ENCODE measurements at regions of chr9 and their contacts with region 1.

Region 1: DNA sequence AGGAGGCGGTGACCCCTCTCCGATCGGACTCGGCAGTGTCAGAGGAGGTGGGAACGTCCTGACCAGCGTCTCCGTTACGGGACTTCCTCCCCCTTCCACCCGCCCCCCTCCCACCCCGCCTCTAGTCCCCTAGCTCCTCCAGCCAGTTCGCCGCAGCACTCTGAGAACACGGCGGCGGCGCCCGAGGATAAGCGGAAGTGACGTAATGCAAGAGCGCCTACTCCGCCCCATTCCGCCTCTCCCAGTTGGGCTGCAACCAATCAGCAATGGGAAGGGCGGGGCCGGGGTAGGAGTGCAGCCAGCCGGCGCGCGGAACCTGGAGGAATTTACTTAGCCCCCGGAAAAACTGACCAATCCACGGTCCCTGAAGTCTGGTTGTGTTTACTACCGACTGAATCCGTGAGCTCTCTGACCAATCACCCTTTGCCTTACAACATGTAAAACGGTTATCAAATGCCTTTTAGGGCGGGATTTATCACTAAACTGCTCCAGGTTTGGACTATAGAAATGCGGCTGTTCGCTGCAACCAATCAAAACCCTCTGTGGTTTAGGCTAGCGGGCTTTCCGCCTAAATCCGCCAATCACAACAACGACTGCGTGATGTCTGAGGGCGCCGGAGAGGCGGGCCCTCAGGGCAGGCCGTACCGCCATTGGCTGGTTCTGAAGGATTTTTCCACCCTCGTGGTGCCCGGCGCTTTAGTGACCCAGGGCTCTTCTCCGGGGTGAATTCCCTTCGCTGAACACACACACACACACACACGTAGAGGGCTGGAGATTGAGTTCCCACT is at the start of gene ZBTB5:
- DNase-seq: peak; percentile 99
- H3K4me3 Mint-ChIP-seq: peak within 1 kb of the TSS; percentile 93
- H3K27ac Mint-ChIP-seq: peak within 1 kb of the TSS; percentile 86
- H3K4me1 Mint-ChIP-seq: peaks cover 30% of the 10 kb centered on the region
- H3K27me3 Mint-ChIP-seq: no peaks in the 10 kb centered on the region
- total RNA-seq, gene ZBTB5: 10.2 TPM

Region 2: GRCh38 chr9:36400332-36401163 is 1064.9 kb before region 1 on chr9:
- CTCF ChIA-PET with region 1: no interaction called
- intact Hi-C with region 1: loop called (anchors 1 kb)
- DNase-seq: peak; percentile 90
- H3K4me3 Mint-ChIP-seq: peak overlapping the region; percentile 86
- H3K27ac Mint-ChIP-seq: peak overlapping the region; percentile 95
- H3K4me1 Mint-ChIP-seq: peaks cover 37% of the 10 kb centered on the region
- H3K27me3 Mint-ChIP-seq: no peaks in the 10 kb centered on the region

Region 3: GRCh38 chr9:37027582-37028419 is 437.6 kb before region 1 on chr9:
- CTCF ChIA-PET with region 1: no interaction called
- intact Hi-C with region 1: loop called (anchors 5 kb)
- DNase-seq: peak; percentile 95
- H3K4me3 Mint-ChIP-seq: peak overlapping the region; percentile 66
- H3K27ac Mint-ChIP-seq: no peak overlapping the region
- H3K4me1 Mint-ChIP-seq: peaks cover 48% of the 10 kb centered on the region
- H3K27me3 Mint-ChIP-seq: peaks cover 85% of the 10 kb centered on the region

Region 4: DNA sequence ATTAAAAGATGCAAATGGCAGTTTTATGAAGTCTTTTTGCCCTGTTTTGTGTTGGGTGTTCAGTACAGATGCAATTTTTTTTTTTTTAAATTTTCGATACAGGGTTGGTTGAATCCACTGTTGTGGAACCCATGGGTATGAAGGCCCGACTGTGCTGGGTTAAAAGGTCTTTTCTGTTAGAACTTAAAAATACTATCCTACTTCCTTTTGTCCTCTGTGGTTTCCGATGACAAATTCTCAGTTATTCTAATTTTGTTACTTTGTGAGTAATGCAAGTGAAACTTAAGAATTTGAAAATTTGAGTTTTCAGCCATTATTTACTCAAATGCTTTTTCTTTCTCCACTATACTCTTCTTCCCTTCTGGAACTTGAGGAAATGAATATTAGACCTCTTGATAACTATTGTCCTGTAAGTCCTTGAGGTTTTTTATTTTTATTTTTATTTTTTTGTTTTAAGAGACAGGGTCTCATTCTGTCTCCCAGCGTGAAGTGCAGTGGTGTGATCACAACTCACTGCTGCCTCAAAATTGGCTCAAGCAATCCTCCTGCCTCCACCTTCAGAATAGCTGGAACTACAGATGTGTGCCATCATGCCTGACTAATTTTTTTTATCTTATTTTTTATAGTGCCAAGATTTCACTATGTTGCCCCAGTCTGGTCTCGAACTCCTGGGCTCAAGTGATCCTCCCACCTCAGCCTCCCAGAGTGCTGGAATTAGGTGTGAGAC is 277.6 kb before region 1 on chr9:
- CTCF ChIA-PET with region 1: no interaction called
- intact Hi-C with region 1: loop called (anchors 5 kb)
- DNase-seq: peak; percentile 18
- H3K4me3 Mint-ChIP-seq: no peak overlapping the region
- H3K27ac Mint-ChIP-seq: peak overlapping the region; percentile 85
- H3K4me1 Mint-ChIP-seq: peaks cover 52% of the 10 kb centered on the region
- H3K27me3 Mint-ChIP-seq: no peaks in the 10 kb centered on the region

Region 5: GRCh38 chr9:37422289-37423104 is 42.9 kb before region 1 on chr9 and contains the start of gene GRHPR:
- CTCF ChIA-PET with region 1: no interaction called
- intact Hi-C with region 1: loop called (anchors 1 kb)
- DNase-seq: peak; percentile 89
- H3K4me3 Mint-ChIP-seq: peak within 1 kb of the TSS; percentile 93
- H3K27ac Mint-ChIP-seq: peak within 1 kb of the TSS; percentile 88
- H3K4me1 Mint-ChIP-seq: peaks cover 24% of the 10 kb centered on the region
- H3K27me3 Mint-ChIP-seq: no peaks in the 10 kb centered on the region
- total RNA-seq, gene GRHPR: 72.8 to 75.6 TPM

Region 6: DNA sequence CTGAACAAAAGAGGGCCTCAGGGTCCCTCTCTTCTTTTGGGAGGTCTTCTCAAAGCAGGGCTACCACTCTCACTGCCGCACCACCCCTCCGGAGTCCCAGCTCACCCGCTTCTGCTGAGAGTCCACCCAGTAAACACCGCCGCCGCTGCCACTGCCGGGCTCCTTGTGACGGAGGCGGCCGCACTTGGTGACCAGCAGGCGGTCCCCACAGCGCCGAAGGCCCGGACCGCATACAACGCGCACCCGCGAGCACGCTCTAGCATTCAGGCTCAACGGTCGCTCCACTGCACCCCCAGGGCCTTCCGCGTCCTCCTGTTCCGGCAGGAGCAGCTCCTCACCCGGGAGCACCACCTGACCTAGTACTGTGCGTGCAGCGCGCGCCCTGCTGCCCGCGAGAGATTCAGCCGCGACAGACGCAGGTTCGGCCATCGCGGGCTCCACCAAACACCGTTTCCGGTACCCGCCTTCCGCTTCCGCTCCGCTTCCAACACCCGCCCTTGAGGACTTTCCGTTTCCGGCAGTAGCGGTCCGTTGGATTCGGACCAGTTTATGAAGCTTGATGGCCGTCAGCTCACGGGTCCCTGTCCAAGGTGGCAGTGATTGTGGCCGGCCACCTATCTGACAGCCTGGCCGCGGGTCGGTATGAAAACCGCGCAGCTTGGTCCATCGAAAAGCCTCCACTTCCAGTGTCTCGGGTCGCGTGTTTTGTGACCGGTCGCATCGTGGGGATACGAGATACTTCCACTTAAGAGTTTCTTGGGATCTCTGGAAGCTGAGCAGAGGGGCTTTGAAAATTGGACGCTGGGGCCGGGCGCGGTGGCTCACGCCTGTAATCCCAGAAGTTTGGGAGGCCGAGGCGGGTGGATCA is 319.4 kb after region 1 on chr9 and contains the start of gene EXOSC3:
- CTCF ChIA-PET with region 1: no interaction called
- intact Hi-C with region 1: loop called (anchors 1 kb)
- DNase-seq: peak; percentile 91
- H3K4me3 Mint-ChIP-seq: peak within 1 kb of the TSS; percentile 96
- H3K27ac Mint-ChIP-seq: peak within 1 kb of the TSS; percentile 94
- H3K4me1 Mint-ChIP-seq: peaks cover 37% of the 10 kb centered on the region
- H3K27me3 Mint-ChIP-seq: no peaks in the 10 kb centered on the region
- total RNA-seq, gene EXOSC3: 93.7 to 99.7 TPM

Measured in activated naive CD4-positive, alpha-beta T cell treated with anti-CD3 and anti-CD28 coated beads for 36 hours (primary cell).